ENCODE measurements at regions of chr5 and their contacts with region 1.

Region 1: DNA sequence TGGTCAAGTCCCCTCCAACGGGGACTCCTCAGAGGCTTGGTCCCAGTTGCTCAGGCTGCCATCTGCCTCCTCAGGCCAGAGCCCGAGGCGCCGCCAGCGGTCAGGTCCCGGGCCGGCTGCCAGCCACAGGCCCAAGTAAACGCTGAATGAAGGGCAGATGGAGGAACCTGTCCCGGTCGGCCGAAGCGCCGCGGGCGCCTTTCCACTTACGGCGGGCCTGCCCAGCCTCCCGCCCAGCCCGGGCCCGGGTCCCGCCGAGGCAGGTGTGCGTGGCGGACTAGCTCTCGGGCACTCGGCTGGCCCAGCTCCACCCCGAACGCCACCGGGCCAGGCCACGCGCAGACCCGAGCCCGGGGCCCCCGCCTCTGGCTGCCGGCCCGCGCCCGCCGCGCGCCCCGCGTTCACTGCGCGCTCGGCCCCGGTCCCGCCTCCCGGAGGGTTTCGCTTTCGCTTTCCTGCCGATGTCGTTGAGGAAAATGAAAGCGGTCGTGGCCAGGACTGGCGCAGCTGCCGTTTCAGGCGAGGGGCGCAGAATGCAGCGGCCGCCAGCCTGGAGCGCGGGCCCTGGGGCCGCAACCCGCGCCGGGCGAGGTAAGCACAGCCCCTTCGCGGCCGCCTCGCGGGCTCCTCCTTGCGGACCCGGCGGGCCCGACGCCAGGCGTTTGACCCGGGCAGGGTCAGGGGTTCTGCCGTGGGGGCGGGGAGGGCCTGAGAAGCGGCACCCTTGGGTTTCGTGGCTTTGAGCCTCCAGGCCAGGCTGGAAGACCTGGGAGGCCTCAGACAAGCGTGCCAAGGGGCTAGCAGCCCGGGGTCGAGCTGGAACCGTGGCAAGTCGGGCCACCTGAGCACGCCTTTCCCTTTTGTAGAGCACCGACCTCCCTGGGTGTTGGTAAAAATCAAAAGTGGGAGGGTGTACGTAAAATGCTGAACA is 41.2 kb downstream of the SLC22A5 start:
- DNase-seq: peak; percentile 88
- ATAC-seq: peak; percentile 80
- H3K4me3 Mint-ChIP-seq: peak overlapping the region; percentile 100
- H3K27ac Mint-ChIP-seq: peak overlapping the region; percentile 100
- H3K4me1 Mint-ChIP-seq: peaks cover 59% of the 10 kb centered on the region
- H3K27me3 Mint-ChIP-seq: no peaks in the 10 kb centered on the region

Region 2: DNA sequence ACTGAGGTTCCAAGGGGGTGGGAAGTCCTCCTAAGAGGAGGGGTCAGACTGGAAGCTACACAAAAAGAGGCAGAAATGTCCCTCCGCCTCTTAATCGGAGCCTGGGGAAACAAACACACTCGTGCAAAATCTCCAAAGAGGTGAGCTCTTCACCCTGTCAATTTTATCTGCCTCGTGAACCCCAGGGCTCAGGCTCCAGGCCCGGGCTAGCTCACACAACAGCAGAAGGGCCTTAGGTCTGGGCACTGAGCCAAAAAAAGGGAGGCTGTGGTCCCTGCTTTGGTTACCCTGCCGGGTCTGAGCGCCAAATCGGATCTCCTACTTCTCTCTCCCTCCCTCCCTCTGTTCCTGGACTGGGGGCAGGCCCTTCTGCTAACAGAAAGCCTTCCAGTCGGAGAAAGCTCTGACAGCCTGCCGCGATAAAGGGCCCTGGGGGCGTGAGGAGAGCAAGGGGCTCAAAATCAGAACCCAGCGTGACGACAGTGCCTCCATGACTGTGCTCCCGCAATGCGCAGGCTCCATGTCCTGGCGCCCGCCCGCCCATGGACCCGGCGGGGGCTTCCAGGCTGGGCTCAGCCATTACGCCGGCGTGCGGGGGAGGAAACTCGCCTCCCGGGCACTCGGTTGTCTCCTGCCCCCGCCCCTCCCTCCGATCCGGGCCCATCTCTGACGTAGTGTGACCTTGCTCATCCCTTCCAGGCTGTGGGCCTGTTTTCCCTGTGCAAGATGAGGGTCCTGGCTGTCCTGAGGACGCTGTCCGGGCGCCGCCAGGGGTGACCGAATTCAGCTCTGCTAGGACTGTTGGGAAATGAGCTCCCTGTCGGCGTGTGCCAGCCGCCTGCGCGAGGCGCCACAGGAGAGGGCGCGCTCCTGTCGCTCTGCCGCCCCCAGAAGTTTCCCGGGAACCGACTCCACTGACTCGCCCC is 117.4 kb before region 1 on chr5:
- POLR2A ChIA-PET with region 1: no interaction called
- DNase-seq: peak; percentile 75
- ATAC-seq: peak; percentile 56
- H3K4me3 Mint-ChIP-seq: peak overlapping the region; percentile 91
- H3K27ac Mint-ChIP-seq: peak overlapping the region; percentile 60
- H3K4me1 Mint-ChIP-seq: peaks cover 17% of the 10 kb centered on the region
- H3K27me3 Mint-ChIP-seq: peaks cover 6% of the 10 kb centered on the region

Region 3: DNA sequence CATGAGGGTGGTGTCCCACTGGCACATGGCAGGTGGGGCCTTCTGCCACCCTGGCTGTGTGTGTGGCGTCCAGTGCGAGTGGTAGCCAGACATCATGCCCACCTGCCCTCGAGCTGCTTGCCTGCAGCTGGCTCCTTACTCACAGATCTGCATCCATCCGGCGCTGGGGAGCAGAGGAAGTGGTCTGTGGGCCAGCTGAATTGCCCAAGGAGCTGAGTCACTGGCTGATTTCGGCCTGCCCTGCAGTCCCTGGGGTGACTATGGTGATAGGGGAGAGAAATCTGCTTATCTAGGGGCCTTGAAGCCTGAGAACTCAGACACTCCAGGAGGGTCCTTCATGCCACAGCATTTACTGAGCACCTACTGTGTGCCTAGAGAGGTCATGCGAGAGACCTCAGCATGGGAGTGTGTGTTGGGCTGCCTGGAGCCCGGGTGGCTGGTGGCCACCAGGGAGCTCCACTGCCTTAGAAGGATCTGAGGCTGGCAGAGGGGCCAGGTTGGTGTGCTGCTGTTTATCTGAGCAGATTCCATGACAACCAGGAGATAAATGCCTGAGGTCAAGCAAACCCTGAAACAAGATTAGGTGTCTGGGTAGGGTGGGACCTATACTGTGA is 15.9 kb after region 1 on chr5:
- POLR2A ChIA-PET with region 1: interaction called, 70 read pairs
- DNase-seq: peak; percentile 76
- ATAC-seq: peak; percentile 60
- H3K4me3 Mint-ChIP-seq: peak overlapping the region; percentile 85
- H3K27ac Mint-ChIP-seq: peak overlapping the region; percentile 95
- H3K4me1 Mint-ChIP-seq: peaks cover 88% of the 10 kb centered on the region
- H3K27me3 Mint-ChIP-seq: no peaks in the 10 kb centered on the region

Region 4: GRCh38 chr5:132456296-132457001 is 45.7 kb after region 1 on chr5:
- POLR2A ChIA-PET with region 1: interaction called, 29 read pairs
- DNase-seq: peak; percentile 68
- ATAC-seq: peak; percentile 48
- H3K4me3 Mint-ChIP-seq: peak overlapping the region; percentile 66
- H3K27ac Mint-ChIP-seq: peak overlapping the region; percentile 99
- H3K4me1 Mint-ChIP-seq: peaks cover 77% of the 10 kb centered on the region
- H3K27me3 Mint-ChIP-seq: no peaks in the 10 kb centered on the region

Region 5: DNA sequence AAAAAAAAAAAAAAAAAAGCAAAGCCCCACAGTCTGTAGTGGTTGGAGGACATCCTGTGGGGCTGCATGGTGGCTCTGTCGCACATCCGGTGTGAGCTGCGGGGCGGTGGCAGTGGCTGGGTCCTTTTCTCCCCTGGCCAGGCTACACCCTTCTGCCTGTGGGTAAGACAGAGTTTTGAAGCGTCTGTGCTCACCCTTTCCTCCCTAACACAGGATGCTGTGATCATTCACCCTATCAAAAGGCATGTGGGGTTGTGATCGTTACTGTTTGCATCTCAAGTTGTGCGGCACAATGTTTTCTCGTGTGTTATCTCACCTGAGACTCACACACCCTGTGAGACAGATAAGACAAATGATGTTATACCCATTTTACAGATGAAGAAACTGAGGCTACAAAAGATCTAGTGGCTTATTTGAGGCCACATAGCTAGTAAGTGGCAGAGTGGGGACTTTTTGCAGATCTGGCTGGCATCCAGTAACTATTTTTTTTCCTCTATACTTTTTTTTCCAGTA is 62.4 kb after region 1 on chr5:
- POLR2A ChIA-PET with region 1: interaction called, 31 read pairs
- DNase-seq: peak; percentile 84
- ATAC-seq: peak; percentile 97
- H3K4me3 Mint-ChIP-seq: peak overlapping the region; percentile 55
- H3K27ac Mint-ChIP-seq: peak overlapping the region; percentile 88
- H3K4me1 Mint-ChIP-seq: peaks cover 73% of the 10 kb centered on the region
- H3K27me3 Mint-ChIP-seq: no peaks in the 10 kb centered on the region

Region 6: GRCh38 chr5:132490486-132491367 is 80.0 kb after region 1 on chr5 and contains the start of gene IRF1:
- POLR2A ChIA-PET with region 1: interaction called, 135 read pairs
- DNase-seq: peak; percentile 99
- ATAC-seq: peak; percentile 78
- H3K4me3 Mint-ChIP-seq: peak within 1 kb of the TSS; percentile 98
- H3K27ac Mint-ChIP-seq: peak within 1 kb of the TSS; percentile 92
- H3K4me1 Mint-ChIP-seq: peaks cover 63% of the 10 kb centered on the region
- H3K27me3 Mint-ChIP-seq: no peaks in the 10 kb centered on the region
- total RNA-seq, gene IRF1: 228 to 238 TPM